HCT116 (cell line): ENCODE measurements at regions of chr5 and their contacts with region 1.

Region 1: GRCh38 chr5:60687927-60688720 is 11.8 kb downstream of the DEPDC1B start:
- DNase-seq: no peak
- ATAC-seq: peak; percentile 98
- H3K4me3 ChIP-seq: no peak overlapping the region
- H3K27ac ChIP-seq: no peak overlapping the region
- H3K4me1 ChIP-seq: no peaks in the 10 kb centered on the region
- H3K27me3 ChIP-seq: no peaks in the 10 kb centered on the region
- CTCF ChIP-seq: peak in 2 of 3 experiments; percentile 44 to 50; a peak in 4 of 6 replicates
- POLR2A ChIP-seq: no peak
- RAD21 ChIP-seq: no peak

Region 2: DNA sequence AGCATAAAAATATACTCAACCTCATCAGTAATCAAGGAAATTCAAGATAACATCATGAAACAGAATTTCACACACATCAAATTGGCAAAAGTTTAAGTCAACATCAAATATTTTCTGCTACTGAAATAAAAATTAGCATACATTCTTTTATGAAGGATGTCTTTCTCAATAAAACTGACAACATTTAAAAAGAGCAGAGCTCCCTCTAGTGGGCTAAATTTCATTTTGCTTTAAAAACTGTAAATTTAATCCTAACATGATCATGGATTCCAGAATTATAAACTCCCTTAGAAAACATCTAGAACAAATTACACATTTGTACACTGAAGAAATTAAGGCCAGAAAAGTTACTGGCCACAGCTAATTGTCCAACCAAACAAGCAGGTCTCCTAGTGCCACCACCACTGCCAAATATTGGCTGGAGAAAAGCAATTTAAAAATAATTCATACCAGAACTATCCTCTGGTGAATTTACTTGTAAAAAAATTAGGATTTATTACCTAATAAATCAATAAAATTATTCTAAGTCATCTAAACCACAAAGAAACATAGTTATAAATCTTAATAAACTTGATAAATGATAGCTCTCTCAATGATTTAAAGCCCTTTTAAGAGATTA is 19.3 kb before region 1 on chr5:
- CTCF ChIA-PET with region 1: interaction called, 12 read pairs
- POLR2A ChIA-PET with region 1: no interaction called
- RAD21 ChIA-PET with region 1: no interaction called
- intact Hi-C with region 1: no loop called
- DNase-seq: peak; percentile 31
- ATAC-seq: no peak
- H3K4me3 ChIP-seq: no peak overlapping the region
- H3K27ac ChIP-seq: no peak overlapping the region
- H3K4me1 ChIP-seq: no peaks in the 10 kb centered on the region
- H3K27me3 ChIP-seq: no peaks in the 10 kb centered on the region
- CTCF ChIP-seq: peak; percentile 36 to 75 (median 40); a peak in 4 of 6 replicates
- POLR2A ChIP-seq: no peak
- RAD21 ChIP-seq: peak; percentile 44; the same call in 1 of the 2 replicates

Region 3: DNA sequence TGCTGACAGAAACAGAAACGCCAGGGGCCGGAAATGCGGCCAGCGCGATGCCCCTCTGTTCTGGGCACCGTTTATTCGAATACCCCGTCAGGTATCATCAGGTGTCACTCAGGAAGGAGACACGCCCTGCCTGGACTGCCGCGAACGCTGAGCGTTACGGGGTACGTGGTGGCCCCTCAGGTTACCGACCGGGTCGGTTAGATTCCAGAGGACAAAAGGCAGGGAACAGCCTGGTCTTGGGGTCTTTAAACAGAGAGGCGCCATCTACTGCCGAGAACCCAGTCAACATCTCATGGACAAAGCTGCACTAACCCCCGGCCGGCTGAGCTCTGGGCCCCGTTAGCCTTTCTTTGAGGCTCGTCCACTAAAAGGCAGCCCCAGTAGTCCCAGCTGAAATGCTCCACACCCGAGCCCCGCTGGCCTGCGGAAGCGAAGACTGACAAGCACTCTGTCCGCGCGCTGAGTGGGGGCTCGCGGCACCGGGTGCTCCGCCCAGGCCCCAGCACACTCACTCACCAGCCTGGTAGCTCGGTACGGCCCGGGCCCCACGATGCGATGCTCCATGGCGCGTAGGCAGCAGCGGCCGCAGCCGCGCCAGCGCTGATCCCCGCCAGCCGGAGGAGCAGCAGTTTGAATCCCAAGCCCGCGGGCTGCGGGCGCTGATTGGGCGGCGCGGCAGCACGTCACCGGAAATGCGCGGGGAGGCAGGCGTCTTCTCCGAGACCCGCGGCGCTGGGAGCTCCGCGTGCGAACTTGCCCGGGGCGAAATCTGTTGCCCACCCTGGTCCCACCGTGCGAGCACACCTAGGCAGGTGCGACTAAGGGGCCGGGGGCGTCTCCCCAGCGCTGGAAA is 11.6 kb after region 1 on chr5 and contains the start of gene DEPDC1B:
- CTCF ChIA-PET with region 1: interaction called, 11 read pairs
- POLR2A ChIA-PET with region 1: interaction called, 4 read pairs
- RAD21 ChIA-PET with region 1: no interaction called
- intact Hi-C with region 1: no loop called
- DNase-seq: peak; percentile 76
- ATAC-seq: peak; percentile 89
- H3K4me3 ChIP-seq: peak within 1 kb of the TSS; percentile 76 to 93
- H3K27ac ChIP-seq: peak within 1 kb of the TSS; percentile 87
- H3K4me1 ChIP-seq: peaks cover 2 to 27% of the 10 kb centered on the region in 2 experiments; a peak in 2 of 4 replicates
- H3K27me3 ChIP-seq: no peaks in the 10 kb centered on the region
- CTCF ChIP-seq: peak; percentile 2 to 29 (median 24); a peak in 3 of 6 replicates
- POLR2A ChIP-seq: peak; percentile 85
- RAD21 ChIP-seq: peak; percentile 23; the same call in 1 of the 2 replicates
- total RNA-seq, gene DEPDC1B: 39.7 TPM